Activated naive CD4-positive, alpha-beta T cell treated with anti-CD3 and anti-CD28 coated beads for 36 hours (primary cell): ENCODE measurements at regions of chr21 and their contacts with region 1.

Region 1: GRCh38 chr21:15483138-15483780 is 246.5 kb upstream of the USP25 start:
- DNase-seq: peak; percentile 89
- H3K4me3 Mint-ChIP-seq: no peak overlapping the region
- H3K27ac Mint-ChIP-seq: no peak overlapping the region
- H3K4me1 Mint-ChIP-seq: peaks cover 27% of the 10 kb centered on the region
- H3K27me3 Mint-ChIP-seq: no peaks in the 10 kb centered on the region

Region 2: GRCh38 chr21:14737922-14738321 is 745.3 kb before region 1 on chr21:
- CTCF ChIA-PET with region 1: interaction called, 5 read pairs
- intact Hi-C with region 1: loop called (anchors 2 kb)
- DNase-seq: peak; percentile 62
- H3K4me3 Mint-ChIP-seq: no peak overlapping the region
- H3K27ac Mint-ChIP-seq: no peak overlapping the region
- H3K4me1 Mint-ChIP-seq: peaks cover 31% of the 10 kb centered on the region
- H3K27me3 Mint-ChIP-seq: no peaks in the 10 kb centered on the region

Region 3: GRCh38 chr21:14991957-14992356 is 491.3 kb before region 1 on chr21:
- CTCF ChIA-PET with region 1: no interaction called
- intact Hi-C with region 1: loop called (anchors 5 kb)
- DNase-seq: no peak
- H3K4me3 Mint-ChIP-seq: no peak overlapping the region
- H3K27ac Mint-ChIP-seq: no peak overlapping the region
- H3K4me1 Mint-ChIP-seq: peaks cover 39% of the 10 kb centered on the region
- H3K27me3 Mint-ChIP-seq: no peaks in the 10 kb centered on the region

Region 4: GRCh38 chr21:15221799-15222386 is 261.4 kb before region 1 on chr21:
- CTCF ChIA-PET with region 1: interaction called, 3 read pairs
- intact Hi-C with region 1: loop called (anchors 1 kb)
- DNase-seq: peak; percentile 48
- H3K4me3 Mint-ChIP-seq: no peak overlapping the region
- H3K27ac Mint-ChIP-seq: peak overlapping the region; percentile 30
- H3K4me1 Mint-ChIP-seq: peaks cover 29% of the 10 kb centered on the region
- H3K27me3 Mint-ChIP-seq: peaks cover 4% of the 10 kb centered on the region

Region 5: GRCh38 chr21:15437883-15438282 is 45.4 kb before region 1 on chr21:
- CTCF ChIA-PET with region 1: no interaction called
- intact Hi-C with region 1: loop called (anchors 1 kb)
- DNase-seq: peak; percentile 28
- H3K4me3 Mint-ChIP-seq: no peak overlapping the region
- H3K27ac Mint-ChIP-seq: peak overlapping the region; percentile 36
- H3K4me1 Mint-ChIP-seq: peaks cover 19% of the 10 kb centered on the region
- H3K27me3 Mint-ChIP-seq: no peaks in the 10 kb centered on the region

Region 6: GRCh38 chr21:15449556-15449955 is 33.7 kb before region 1 on chr21:
- CTCF ChIA-PET with region 1: no interaction called
- intact Hi-C with region 1: no loop called
- DNase-seq: no peak
- H3K4me3 Mint-ChIP-seq: no peak overlapping the region
- H3K27ac Mint-ChIP-seq: no peak overlapping the region
- H3K4me1 Mint-ChIP-seq: no peaks in the 10 kb centered on the region
- H3K27me3 Mint-ChIP-seq: no peaks in the 10 kb centered on the region

Region 7: DNA sequence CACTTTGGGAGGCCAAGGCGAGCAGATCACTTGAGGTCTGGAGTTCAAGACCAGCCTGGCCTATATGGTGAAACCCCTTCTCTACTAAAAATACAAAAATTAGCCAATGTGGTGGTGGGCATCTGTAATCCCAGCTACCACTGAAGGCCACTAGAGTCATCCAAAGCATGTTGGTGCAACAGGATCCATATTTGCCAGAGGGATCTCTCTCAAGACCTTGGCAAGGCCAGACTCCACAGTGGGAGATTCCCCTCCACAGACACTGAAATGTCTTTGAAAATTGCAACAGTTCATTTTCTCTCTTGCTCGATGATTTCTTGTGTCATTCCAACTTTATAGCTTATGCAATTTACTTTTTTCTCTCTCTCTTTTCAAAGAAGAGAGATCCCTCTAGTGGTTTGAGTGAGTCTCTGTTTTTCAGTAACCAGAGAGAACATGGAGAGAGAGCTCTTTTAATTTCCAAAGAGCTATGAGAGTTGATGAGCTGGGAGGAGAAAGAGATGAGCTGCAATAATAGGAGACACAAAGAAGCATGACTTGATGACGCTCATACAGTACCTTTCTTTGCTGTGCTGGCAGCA is 69.7 kb after region 1 on chr21:
- CTCF ChIA-PET with region 1: interaction called, 7 read pairs
- intact Hi-C with region 1: loop called (anchors 1 kb)
- DNase-seq: no peak
- H3K4me3 Mint-ChIP-seq: no peak overlapping the region
- H3K27ac Mint-ChIP-seq: no peak overlapping the region
- H3K4me1 Mint-ChIP-seq: peaks cover 15% of the 10 kb centered on the region
- H3K27me3 Mint-ChIP-seq: no peaks in the 10 kb centered on the region